Activated B cell treated with CpG ODN at 0.5 μM for 24 hours (primary cell): ENCODE measurements at regions of chr9 and their contacts with region 1.

Region 1: GRCh38 chr9:5886114-5886939 is 4.4 kb upstream of the MLANA start:
- DNase-seq: peak; percentile 59
- ATAC-seq: peak; percentile 90
- H3K4me3 Mint-ChIP-seq: no peak overlapping the region
- H3K27ac Mint-ChIP-seq: no peak overlapping the region
- H3K4me1 Mint-ChIP-seq: no peaks in the 10 kb centered on the region
- H3K27me3 Mint-ChIP-seq: no peaks in the 10 kb centered on the region
- CTCF ChIP-seq: peak; percentile 52

Region 2: DNA sequence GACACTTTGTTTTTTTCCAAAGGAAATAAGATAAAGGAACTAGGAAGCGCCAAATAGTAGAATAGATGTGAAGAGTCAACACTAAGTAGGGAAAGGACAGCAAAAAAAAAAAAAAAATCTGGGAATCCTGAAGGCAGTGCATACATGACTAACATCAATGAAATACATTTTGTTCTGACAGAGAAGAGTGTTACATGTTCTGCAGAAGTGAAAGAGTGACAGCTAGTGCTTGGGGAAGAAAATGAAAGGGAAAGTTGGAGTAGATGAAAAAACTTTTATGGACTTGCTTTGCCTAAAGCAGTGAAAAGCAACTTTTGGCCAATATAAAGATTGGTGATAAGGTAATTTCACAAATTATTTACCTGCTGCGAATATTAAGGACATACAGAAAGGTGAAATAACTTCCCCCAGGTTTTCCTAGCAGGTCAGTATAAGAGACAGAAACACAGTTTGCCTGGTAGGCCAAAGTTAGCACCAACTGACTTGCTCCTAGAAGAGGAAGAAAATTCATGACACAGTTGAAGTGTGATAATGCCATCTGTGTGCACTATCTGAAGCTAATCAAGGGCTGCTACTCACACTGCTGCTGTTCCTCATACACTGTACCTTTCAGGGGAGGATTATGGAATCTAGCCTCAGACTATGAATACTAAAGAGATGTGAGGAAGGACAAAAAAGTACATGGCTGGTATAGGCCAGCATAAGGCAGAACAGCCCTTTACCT is 90.5 kb after region 1 on chr9:
- CTCF ChIA-PET with region 1: interaction called, 9 read pairs
- POLR2A ChIA-PET with region 1: no interaction called
- intact Hi-C with region 1: loop called (anchors 10 kb)
- DNase-seq: no peak
- ATAC-seq: no peak
- H3K4me3 Mint-ChIP-seq: no peak overlapping the region
- H3K27ac Mint-ChIP-seq: peak overlapping the region; percentile 50
- H3K4me1 Mint-ChIP-seq: peaks cover 16% of the 10 kb centered on the region
- H3K27me3 Mint-ChIP-seq: no peaks in the 10 kb centered on the region
- CTCF ChIP-seq: no peak

Region 3: GRCh38 chr9:6160579-6160978 is 274.3 kb after region 1 on chr9:
- CTCF ChIA-PET with region 1: no interaction called
- POLR2A ChIA-PET with region 1: no interaction called
- intact Hi-C with region 1: no loop called
- DNase-seq: no peak
- ATAC-seq: no peak
- H3K4me3 Mint-ChIP-seq: no peak overlapping the region
- H3K27ac Mint-ChIP-seq: no peak overlapping the region
- H3K4me1 Mint-ChIP-seq: no peaks in the 10 kb centered on the region
- H3K27me3 Mint-ChIP-seq: peaks cover 4% of the 10 kb centered on the region
- CTCF ChIP-seq: no peak

Region 4: DNA sequence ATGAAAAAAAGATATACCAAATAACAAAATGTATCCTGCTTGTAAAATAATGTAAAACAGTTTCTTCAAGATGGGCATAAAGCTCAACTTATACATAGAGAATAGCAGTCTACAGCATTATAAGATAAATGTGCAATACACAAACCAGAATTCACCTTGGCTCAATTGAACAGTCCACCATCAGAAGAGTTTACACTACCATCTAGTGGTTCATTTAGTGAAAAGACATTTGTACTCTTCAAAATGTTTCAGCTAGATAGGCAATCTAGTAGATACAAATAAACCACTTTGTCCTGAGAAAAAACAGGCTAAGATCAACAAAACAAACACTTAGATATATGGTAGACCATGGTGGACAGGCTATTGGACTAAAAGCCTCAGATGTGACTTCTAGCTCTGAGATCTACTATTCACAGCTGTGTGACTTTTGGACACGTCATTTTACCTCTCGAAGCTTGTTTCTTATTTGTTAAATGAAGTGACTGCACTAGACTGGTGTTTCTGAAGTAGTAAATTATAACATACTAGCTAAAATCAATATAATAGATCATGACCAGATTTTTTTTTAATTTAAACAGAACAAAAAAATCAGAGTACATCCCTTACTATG is 419.7 kb after region 1 on chr9:
- CTCF ChIA-PET with region 1: interaction called, 25 read pairs
- POLR2A ChIA-PET with region 1: no interaction called
- intact Hi-C with region 1: no loop called
- DNase-seq: no peak
- ATAC-seq: no peak
- H3K4me3 Mint-ChIP-seq: no peak overlapping the region
- H3K27ac Mint-ChIP-seq: no peak overlapping the region
- H3K4me1 Mint-ChIP-seq: no peaks in the 10 kb centered on the region
- H3K27me3 Mint-ChIP-seq: peaks cover 13% of the 10 kb centered on the region
- CTCF ChIP-seq: no peak

Region 5: DNA sequence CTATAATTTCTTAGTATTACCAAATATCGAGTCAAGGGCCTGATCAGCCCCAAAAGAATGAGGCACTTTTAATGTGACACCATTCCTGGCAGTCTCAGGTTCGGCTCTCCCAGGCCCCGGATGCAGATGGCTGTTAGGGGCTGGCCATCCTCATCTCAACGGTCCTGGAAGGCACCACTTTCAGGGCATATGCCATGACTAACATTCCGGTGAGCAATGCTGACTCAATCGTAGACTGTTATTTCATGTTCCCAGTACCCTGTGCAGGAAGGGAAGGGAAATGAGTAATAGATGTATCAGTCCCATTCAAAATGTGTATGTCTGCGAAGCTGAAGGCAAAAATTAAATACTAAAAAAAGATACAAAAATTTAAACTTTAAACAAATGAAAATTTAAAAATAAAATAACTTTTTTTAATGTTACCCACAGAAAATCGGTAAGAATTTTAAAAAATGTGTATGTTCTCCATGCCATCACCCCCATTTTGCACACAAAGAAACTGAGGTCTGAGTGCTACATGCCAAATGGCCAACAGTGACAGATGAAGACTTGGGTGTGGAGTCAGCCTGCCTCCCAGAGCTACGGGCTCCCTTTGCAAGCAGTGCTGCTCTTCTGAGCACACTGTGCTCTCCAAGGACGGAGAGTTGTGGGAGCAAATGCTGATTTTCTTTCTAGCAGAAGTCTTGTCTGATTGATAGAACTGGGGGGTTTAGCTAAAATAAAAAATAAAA is 680.2 kb after region 1 on chr9:
- CTCF ChIA-PET with region 1: no interaction called
- POLR2A ChIA-PET with region 1: no interaction called
- intact Hi-C with region 1: loop called (anchors 10 kb)
- DNase-seq: no peak
- ATAC-seq: no peak
- H3K4me3 Mint-ChIP-seq: no peak overlapping the region
- H3K27ac Mint-ChIP-seq: no peak overlapping the region
- H3K4me1 Mint-ChIP-seq: no peaks in the 10 kb centered on the region
- H3K27me3 Mint-ChIP-seq: no peaks in the 10 kb centered on the region
- CTCF ChIP-seq: no peak